Activated CD8-positive, alpha-beta T cell treated with anti-CD3 and anti-CD28 coated beads for 36 hours (primary cell): ENCODE measurements at regions of chr19 and their contacts with region 1.

Region 1: GRCh38 chr19:8269724-8270123 is 38.4 kb downstream of the CD320 start:
- DNase-seq: no peak
- ATAC-seq: no peak
- H3K4me3 Mint-ChIP-seq: peak overlapping the region; percentile 78
- H3K27ac Mint-ChIP-seq: peak overlapping the region; percentile 91
- H3K4me1 Mint-ChIP-seq: peaks cover 13% of the 10 kb centered on the region
- H3K27me3 Mint-ChIP-seq: no peaks in the 10 kb centered on the region
- CTCF ChIP-seq: no peak

Region 2: GRCh38 chr19:8148410-8149231 is 121.1 kb before region 1 on chr19:
- CTCF ChIA-PET with region 1: no interaction called
- POLR2A ChIA-PET with region 1: no interaction called
- intact Hi-C with region 1: no loop called
- DNase-seq: peak; percentile 14
- ATAC-seq: peak; percentile 39
- H3K4me3 Mint-ChIP-seq: no peak overlapping the region
- H3K27ac Mint-ChIP-seq: no peak overlapping the region
- H3K4me1 Mint-ChIP-seq: peaks cover 8% of the 10 kb centered on the region
- H3K27me3 Mint-ChIP-seq: peaks cover 45% of the 10 kb centered on the region
- CTCF ChIP-seq: no peak

Region 3: GRCh38 chr19:8307965-8308866 is 38.5 kb after region 1 on chr19 and contains the start of gene CD320:
- CTCF ChIA-PET with region 1: interaction called, 3 read pairs
- POLR2A ChIA-PET with region 1: interaction called, 4 read pairs
- intact Hi-C with region 1: loop called (anchors 5 kb)
- DNase-seq: peak; percentile 90
- ATAC-seq: peak; percentile 91
- H3K4me3 Mint-ChIP-seq: peak within 1 kb of the TSS; percentile 99
- H3K27ac Mint-ChIP-seq: peak within 1 kb of the TSS; percentile 96
- H3K4me1 Mint-ChIP-seq: peaks cover 34% of the 10 kb centered on the region
- H3K27me3 Mint-ChIP-seq: no peaks in the 10 kb centered on the region
- CTCF ChIP-seq: no peak
- total RNA-seq, gene CD320: 59.0 to 62.2 TPM